A673 (cell line): ENCODE measurements at regions of chr20 and their contacts with region 1.

Region 1: DNA sequence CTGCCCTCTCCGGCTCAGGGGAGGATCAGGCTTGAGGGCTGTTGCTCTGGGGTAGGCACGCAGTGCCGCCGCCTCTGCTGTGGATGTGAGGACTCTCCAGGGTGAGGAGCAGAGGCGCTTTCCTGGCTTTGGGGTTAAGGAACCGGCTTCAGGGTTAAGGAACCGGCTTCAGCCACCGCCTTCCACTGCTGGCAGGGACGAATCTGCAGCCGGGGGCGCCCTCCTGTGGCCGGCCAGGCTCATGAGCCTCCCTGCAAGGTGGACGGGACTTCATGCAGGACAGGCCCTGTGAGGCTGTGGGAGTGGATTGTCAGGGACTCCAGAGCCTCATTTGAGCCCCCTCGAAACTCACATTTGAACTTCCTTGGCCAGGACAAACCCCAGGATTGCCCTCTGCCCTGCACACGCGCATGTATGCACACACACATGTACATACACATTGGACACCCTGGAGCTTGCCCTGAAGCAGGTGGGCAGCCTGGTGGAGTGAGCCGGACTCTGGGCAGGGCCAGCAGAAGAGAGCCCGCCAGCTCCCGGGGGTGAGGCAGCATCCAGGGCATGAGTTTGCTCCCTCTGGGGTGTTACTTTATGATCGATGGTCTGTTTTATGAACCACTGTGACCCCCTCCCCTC is 146.8 kb downstream of the PHACTR3 start:
- DNase-seq: peak; percentile 64
- H3K4me3 ChIP-seq: no peak overlapping the region
- H3K27ac ChIP-seq: no peak overlapping the region
- H3K4me1 ChIP-seq: no peaks in the 10 kb centered on the region
- H3K27me3 ChIP-seq: peaks cover 53% of the 10 kb centered on the region
- CTCF ChIP-seq: peak; percentile 91

Region 2: GRCh38 chr20:59518881-59519688 is 232.1 kb before region 1 on chr20:
- CTCF ChIA-PET with region 1: no interaction called
- POLR2A ChIA-PET with region 1: no interaction called
- intact Hi-C with region 1: loop called (anchors 5 kb)
- DNase-seq: peak; percentile 63
- H3K4me3 ChIP-seq: no peak overlapping the region
- H3K27ac ChIP-seq: no peak overlapping the region
- H3K4me1 ChIP-seq: no peaks in the 10 kb centered on the region
- H3K27me3 ChIP-seq: peaks cover 45% of the 10 kb centered on the region
- CTCF ChIP-seq: peak; percentile 75

Region 3: DNA sequence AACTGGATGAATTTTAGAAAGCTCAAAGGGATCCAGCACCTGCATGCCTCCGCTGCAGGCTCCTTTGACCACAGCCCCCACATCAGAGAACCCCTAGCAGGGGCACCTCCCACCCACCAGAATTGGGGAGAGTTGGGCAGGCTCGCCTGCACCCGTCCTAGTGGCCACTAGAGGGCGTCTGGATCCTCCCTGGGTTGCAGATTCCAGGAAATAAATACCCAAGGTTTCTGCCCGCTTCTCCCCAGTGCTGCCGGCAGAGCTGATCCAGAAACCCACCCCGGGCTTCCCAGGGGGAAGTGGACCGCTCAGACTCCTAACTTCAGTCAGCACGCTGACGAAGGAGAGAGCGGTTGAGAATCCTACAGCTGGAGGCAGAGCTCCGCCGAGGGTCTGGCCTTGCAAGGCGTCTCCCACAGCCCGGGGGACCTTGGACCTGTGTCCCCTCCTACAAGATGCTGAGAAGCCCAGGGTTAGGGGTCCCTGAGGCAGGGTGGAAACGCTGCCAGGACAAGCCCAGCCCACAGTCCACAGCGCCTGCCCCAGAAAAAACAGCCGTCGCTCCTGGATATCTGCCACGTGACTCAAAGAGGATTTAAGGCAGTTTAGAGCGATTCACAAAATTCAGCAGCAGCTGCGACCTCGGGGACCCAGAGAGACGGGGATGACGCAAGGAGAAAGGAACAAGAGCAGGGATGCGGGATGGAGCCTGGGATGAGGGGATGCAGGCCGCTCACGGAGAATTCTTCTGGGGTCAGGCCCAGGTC is 179.4 kb before region 1 on chr20:
- CTCF ChIA-PET with region 1: interaction called, 4 read pairs
- POLR2A ChIA-PET with region 1: no interaction called
- intact Hi-C with region 1: loop called (anchors 1 kb)
- DNase-seq: peak; percentile 68
- H3K4me3 ChIP-seq: peak overlapping the region; percentile 39
- H3K27ac ChIP-seq: no peak overlapping the region
- H3K4me1 ChIP-seq: peaks cover 8% of the 10 kb centered on the region
- H3K27me3 ChIP-seq: peaks cover 48% of the 10 kb centered on the region
- CTCF ChIP-seq: peak; percentile 95

Region 4: DNA sequence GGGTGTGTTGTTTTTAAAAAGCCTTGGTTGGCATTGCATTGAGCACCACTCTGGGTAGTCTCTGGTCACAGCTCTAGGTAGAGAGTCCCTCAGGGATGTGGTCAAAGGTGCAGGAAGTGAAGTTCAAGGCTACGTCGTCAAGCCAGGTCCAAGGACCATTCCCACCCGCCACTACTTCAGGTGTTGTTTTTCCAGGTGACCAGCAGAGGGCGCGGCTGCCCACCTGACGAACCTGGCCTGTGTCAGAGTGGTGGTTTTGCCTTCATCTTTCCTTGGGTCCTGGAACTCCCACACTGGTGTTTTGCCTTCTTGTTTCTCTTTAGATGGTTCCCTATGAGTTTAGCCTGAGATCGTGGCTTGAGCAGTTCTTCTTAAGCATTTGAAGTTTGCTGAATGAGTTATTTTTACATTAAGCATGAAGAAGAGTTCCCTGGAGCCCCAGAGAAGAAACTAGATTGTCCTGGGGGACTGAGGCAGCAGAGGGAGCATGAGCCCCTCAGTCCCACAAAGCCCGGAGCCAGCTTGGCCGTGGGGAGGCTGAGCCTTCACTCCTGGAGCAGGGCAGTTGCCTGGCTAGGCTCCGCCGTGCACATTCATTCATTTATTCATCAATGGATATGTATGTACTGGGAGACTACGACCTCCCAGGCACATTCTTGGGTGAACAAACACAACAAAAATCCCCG is 152.4 kb before region 1 on chr20:
- CTCF ChIA-PET with region 1: no interaction called
- POLR2A ChIA-PET with region 1: no interaction called
- intact Hi-C with region 1: loop called (anchors 1 kb)
- DNase-seq: peak; percentile 25
- H3K4me3 ChIP-seq: no peak overlapping the region
- H3K27ac ChIP-seq: no peak overlapping the region
- H3K4me1 ChIP-seq: no peaks in the 10 kb centered on the region
- H3K27me3 ChIP-seq: peaks cover 41% of the 10 kb centered on the region
- CTCF ChIP-seq: peak; percentile 83

Region 5: GRCh38 chr20:59723607-59724456 is 27.3 kb before region 1 on chr20:
- CTCF ChIA-PET with region 1: no interaction called
- POLR2A ChIA-PET with region 1: no interaction called
- intact Hi-C with region 1: no loop called
- DNase-seq: peak; percentile 15
- H3K4me3 ChIP-seq: no peak overlapping the region
- H3K27ac ChIP-seq: no peak overlapping the region
- H3K4me1 ChIP-seq: no peaks in the 10 kb centered on the region
- H3K27me3 ChIP-seq: no peaks in the 10 kb centered on the region
- CTCF ChIP-seq: no peak